Psoas muscle (tissue), 8 donors: ENCODE measurements at regions of chr4 and their contacts with region 1.

Region 1: GRCh38 chr4:40840985-40841571 is 91.3 kb downstream of the NSUN7 start:
- DNase-seq: peak; percentile 76 to 85
- ATAC-seq: peak; percentile 72 to 80 (median 78)
- H3K4me3 ChIP-seq: no peak overlapping the region
- H3K27ac ChIP-seq: peak overlapping the region; percentile 87
- H3K4me1 ChIP-seq: peaks cover 23% of the 10 kb centered on the region
- H3K27me3 ChIP-seq: no peaks in the 10 kb centered on the region
- CTCF ChIP-seq: peak; percentile 71

Region 2: GRCh38 chr4:40736910-40737309 is 104.2 kb before region 1 on chr4:
- intact Hi-C with region 1: loop called in 1 of 2 experiments (anchors 10 kb)
- DNase-seq: no peak
- ATAC-seq: peak in 1 of 4 donors; percentile 49
- H3K4me3 ChIP-seq: no peak overlapping the region
- H3K27ac ChIP-seq: no peak overlapping the region
- H3K4me1 ChIP-seq: no peaks in the 10 kb centered on the region
- H3K27me3 ChIP-seq: no peaks in the 10 kb centered on the region
- CTCF ChIP-seq: peak; percentile 39

Region 3: GRCh38 chr4:40897557-40898203 is 56.6 kb after region 1 on chr4:
- intact Hi-C with region 1: loop called in 1 of 2 experiments (anchors 5 kb)
- DNase-seq: peak; percentile 69 to 80
- ATAC-seq: peak; percentile 61 to 82 (median 76)
- H3K4me3 ChIP-seq: no peak overlapping the region
- H3K27ac ChIP-seq: no peak overlapping the region
- H3K4me1 ChIP-seq: peaks cover 7% of the 10 kb centered on the region
- H3K27me3 ChIP-seq: no peaks in the 10 kb centered on the region
- CTCF ChIP-seq: peak; percentile 74

Region 4: GRCh38 chr4:40916880-40917279 is 75.8 kb after region 1 on chr4:
- intact Hi-C with region 1: loop called in 1 of 2 experiments (anchors 5 kb)
- DNase-seq: peak; percentile 53 to 65
- ATAC-seq: peak; percentile 75 to 86 (median 81)
- H3K4me3 ChIP-seq: peak overlapping the region; percentile 19
- H3K27ac ChIP-seq: peak overlapping the region; percentile 81
- H3K4me1 ChIP-seq: peaks cover 37% of the 10 kb centered on the region
- H3K27me3 ChIP-seq: no peaks in the 10 kb centered on the region
- CTCF ChIP-seq: peak; percentile 45